Lower leg skin (tissue), 4 donors: ENCODE measurements at regions of chr11 and their contacts with region 1.

Region 1: GRCh38 chr11:106724293-106724892 is 293.9 kb downstream of the GUCY1A2 start:
- DNase-seq: no peak
- H3K4me3 ChIP-seq: no peak overlapping the region
- CTCF ChIP-seq: no peak
- POLR2A ChIP-seq: no peak

Region 2: DNA sequence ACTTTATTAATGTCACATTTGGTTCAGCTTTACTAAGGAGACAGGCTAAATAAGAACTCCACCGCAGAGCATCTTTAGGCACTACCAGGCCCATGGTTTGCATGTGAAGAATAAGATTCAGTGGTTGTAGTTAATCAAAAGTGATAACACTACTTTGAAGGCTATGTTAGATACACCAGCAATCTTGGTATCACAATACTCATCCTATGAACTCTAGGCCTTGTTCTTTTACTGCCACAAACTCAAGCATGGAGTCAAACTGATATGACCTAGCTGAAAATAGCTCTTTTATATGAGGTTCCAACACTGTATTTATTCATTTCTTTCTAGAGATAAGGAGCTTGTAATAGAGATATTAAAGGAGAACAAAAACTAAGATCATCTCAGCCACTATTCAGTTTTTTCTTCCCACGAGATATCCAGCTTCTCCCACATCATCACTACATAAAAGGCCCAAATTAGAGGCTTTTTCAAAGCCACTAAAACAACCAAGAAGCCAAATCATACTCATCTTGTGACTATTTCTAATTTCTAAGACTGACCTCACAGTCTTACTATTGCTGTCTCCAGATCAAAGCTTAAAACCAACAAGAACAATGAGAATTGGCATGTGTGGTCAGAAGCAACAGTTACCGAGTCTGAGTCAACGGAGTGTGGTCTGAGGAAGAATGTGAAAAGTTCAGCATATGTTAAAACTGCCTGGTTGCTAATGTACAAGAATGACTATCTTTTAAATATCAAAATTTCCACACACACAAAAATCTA is 319.0 kb after region 1 on chr11:
- intact Hi-C with region 1: loop called (anchors 5 kb)
- DNase-seq: no peak
- H3K4me3 ChIP-seq: no peak overlapping the region
- CTCF ChIP-seq: no peak
- POLR2A ChIP-seq: no peak